ENCODE measurements at regions of chr11 and their contacts with region 1.

Region 1: DNA sequence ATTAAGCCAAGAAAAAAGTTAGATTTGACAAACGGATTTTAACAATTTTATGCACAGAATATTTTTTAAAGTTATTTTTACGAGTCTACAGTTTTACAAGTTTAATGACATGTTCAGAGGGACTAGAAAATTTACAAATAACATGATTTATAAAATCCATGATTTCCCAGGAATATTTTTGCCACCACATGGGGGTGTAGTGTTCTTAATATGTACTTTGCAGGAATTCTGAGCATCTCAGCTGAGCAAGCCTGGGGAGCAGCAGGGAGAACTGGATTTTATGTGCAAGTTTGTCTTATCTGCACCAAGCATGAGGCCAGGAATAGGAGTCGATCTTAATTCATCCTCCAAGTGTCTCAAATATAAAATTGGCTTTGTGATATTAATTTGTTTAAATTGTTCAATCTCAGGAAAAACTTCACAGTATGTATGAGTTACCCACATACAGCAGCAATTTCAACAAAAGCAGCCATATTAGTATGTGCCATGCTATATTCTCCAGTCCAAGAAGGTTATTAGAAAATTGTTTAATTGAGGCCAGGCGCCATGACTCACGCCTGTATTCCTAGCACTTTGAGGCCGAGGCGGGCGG is 826.3 kb downstream of the DLG2 start:
- DNase-seq: peak; percentile 8
- H3K4me3 ChIP-seq: no peak overlapping the region
- H3K27ac ChIP-seq: no peak overlapping the region
- H3K4me1 ChIP-seq: no peaks in the 10 kb centered on the region
- H3K27me3 ChIP-seq: peaks cover 2% of the 10 kb centered on the region
- CTCF ChIP-seq: peak; percentile 21 to 55

Region 2: GRCh38 chr11:84899740-84900139 is 98.9 kb after region 1 on chr11:
- CTCF ChIA-PET with region 1: no interaction called
- dilution Hi-C with region 1: no loop called
- in situ Hi-C with region 1: no loop called
- intact Hi-C with region 1: loop called (anchors 10 kb)
- DNase-seq: no peak
- H3K4me3 ChIP-seq: no peak overlapping the region
- H3K27ac ChIP-seq: no peak overlapping the region
- H3K4me1 ChIP-seq: no peaks in the 10 kb centered on the region
- H3K27me3 ChIP-seq: no peaks in the 10 kb centered on the region
- CTCF ChIP-seq: no peak

Region 3: GRCh38 chr11:84993386-84993785 is 192.5 kb after region 1 on chr11:
- CTCF ChIA-PET with region 1: no interaction called
- dilution Hi-C with region 1: no loop called
- in situ Hi-C with region 1: no loop called
- intact Hi-C with region 1: loop called (anchors 1 kb)
- DNase-seq: peak; percentile 4
- H3K4me3 ChIP-seq: no peak overlapping the region
- H3K27ac ChIP-seq: no peak overlapping the region
- H3K4me1 ChIP-seq: no peaks in the 10 kb centered on the region
- H3K27me3 ChIP-seq: no peaks in the 10 kb centered on the region
- CTCF ChIP-seq: peak; percentile 40 to 51